ENCODE measurements at regions of chr14 and their contacts with region 1.

Region 1: DNA sequence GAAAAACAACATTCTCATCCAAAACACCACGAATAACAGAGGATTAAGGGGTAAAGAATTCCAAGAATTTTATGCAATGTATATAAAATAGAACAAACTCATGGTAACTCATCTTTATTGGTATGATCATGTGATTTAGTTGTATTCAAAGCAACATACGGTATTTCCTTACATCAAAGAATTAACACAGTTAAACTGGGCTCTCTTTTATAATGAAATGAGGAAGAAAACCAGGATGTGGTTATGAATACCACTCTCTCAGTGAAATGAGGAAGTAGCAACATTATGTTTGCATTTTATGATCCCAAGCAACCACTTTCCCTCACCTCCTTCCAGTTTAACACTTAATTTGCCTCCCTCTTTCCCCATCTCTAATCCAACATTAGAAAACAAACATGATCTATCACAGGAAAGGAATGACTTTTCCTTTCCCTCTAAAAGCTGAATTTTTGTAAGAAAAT is 22.9 kb downstream of the SPTLC2 start:
- DNase-seq: peak in 6 of 9 donors; percentile 30 to 71 (median 68)
- ATAC-seq: peak; percentile 86
- H3K4me3 ChIP-seq: peak overlapping the region; percentile 15
- H3K4me3 Mint-ChIP-seq: peak overlapping the region; percentile 61 to 89 (median 80)
- H3K27ac ChIP-seq: peak overlapping the region; percentile 56
- H3K27ac Mint-ChIP-seq: peak overlapping the region; percentile 83 to 93 (median 89)
- H3K4me1 ChIP-seq: peaks cover 13 to 43% of the 10 kb centered on the region in 2 donors
- H3K4me1 Mint-ChIP-seq: peaks cover 29 to 72% (median 62%) of the 10 kb centered on the region in 7 donors
- H3K27me3 ChIP-seq: no peaks in the 10 kb centered on the region
- H3K27me3 Mint-ChIP-seq: no peaks in the 10 kb centered on the region

Region 2: DNA sequence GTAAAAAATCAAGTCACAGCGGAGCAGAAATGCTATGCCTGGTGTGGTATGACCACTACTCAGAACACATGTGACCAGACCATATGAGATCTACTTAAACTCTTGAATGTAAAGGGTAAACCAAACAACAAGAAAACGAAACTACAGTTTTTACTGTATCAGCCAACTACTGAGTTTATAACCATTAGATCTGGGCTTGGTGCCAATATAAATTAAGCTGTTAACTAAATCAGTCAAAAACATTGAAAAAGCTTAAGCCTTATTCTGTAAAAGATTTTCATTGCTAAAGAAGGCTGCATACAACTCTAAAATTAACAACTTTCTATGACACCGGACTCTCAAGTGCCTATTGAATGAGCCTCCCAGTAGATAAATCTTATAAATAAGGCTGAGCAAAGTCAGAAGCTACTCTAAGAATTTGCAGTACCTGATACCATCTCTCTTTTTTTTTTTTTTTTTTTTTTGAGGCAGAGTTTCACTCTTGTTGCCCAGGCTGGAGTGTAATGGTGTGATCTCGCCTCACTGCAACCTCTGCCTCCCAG is 12.5 kb before region 1 on chr14:
- CTCF ChIA-PET with region 1: interaction called, 3 read pairs
- POLR2A ChIA-PET with region 1: no interaction called
- intact Hi-C with region 1: loop called in 1 of 2 experiments (anchors 1 kb)
- DNase-seq: peak in 6 of 9 donors; percentile 20 to 55 (median 36)
- ATAC-seq: peak; percentile 76
- H3K4me3 ChIP-seq: peak overlapping the region; percentile 6
- H3K4me3 Mint-ChIP-seq: peak overlapping the region; percentile 34 to 68 (median 58)
- H3K27ac ChIP-seq: no peak overlapping the region
- H3K27ac Mint-ChIP-seq: peak overlapping the region in 8 of 9 donors; percentile 28 to 86 (median 62)
- H3K4me1 ChIP-seq: peaks cover 5 to 7% of the 10 kb centered on the region in 2 donors
- H3K4me1 Mint-ChIP-seq: peaks cover 17 to 53% (median 39%) of the 10 kb centered on the region in 7 donors
- H3K27me3 ChIP-seq: no peaks in the 10 kb centered on the region
- H3K27me3 Mint-ChIP-seq: no peaks in the 10 kb centered on the region

Region 3: GRCh38 chr14:77641534-77642341 is 48.2 kb after region 1 on chr14:
- CTCF ChIA-PET with region 1: no interaction called
- POLR2A ChIA-PET with region 1: no interaction called
- intact Hi-C with region 1: loop called in 1 of 2 experiments (anchors 10 kb)
- DNase-seq: peak; percentile 33 to 68 (median 59)
- ATAC-seq: peak; percentile 80
- H3K4me3 ChIP-seq: peak overlapping the region; percentile 84
- H3K4me3 Mint-ChIP-seq: peak overlapping the region; percentile 84 to 95 (median 92)
- H3K27ac ChIP-seq: peak overlapping the region; percentile 70
- H3K27ac Mint-ChIP-seq: peak overlapping the region; percentile 90 to 97 (median 92)
- H3K4me1 ChIP-seq: peaks cover 8% of the 10 kb centered on the region in 2 donors
- H3K4me1 Mint-ChIP-seq: peaks cover 0 to 19% (median 16%) of the 10 kb centered on the region in 7 donors
- H3K27me3 ChIP-seq: no peaks in the 10 kb centered on the region
- H3K27me3 Mint-ChIP-seq: peaks cover 0 to 3% (median 0%) of the 10 kb centered on the region in 5 donors

Region 4: GRCh38 chr14:79050787-79051727 is 1457.5 kb after region 1 on chr14:
- CTCF ChIA-PET with region 1: no interaction called
- POLR2A ChIA-PET with region 1: no interaction called
- intact Hi-C with region 1: no loop called
- DNase-seq: no peak
- ATAC-seq: no peak
- H3K4me3 ChIP-seq: no peak overlapping the region
- H3K4me3 Mint-ChIP-seq: no peak overlapping the region
- H3K27ac ChIP-seq: no peak overlapping the region
- H3K27ac Mint-ChIP-seq: no peak overlapping the region
- H3K4me1 ChIP-seq: no peaks in the 10 kb centered on the region
- H3K4me1 Mint-ChIP-seq: peaks cover 0 to 2% (median 0%) of the 10 kb centered on the region in 7 donors
- H3K27me3 ChIP-seq: no peaks in the 10 kb centered on the region
- H3K27me3 Mint-ChIP-seq: no peaks in the 10 kb centered on the region